Transverse colon (tissue), 4 donors: ENCODE measurements at regions of chr2 and their contacts with region 1.

Region 1: DNA sequence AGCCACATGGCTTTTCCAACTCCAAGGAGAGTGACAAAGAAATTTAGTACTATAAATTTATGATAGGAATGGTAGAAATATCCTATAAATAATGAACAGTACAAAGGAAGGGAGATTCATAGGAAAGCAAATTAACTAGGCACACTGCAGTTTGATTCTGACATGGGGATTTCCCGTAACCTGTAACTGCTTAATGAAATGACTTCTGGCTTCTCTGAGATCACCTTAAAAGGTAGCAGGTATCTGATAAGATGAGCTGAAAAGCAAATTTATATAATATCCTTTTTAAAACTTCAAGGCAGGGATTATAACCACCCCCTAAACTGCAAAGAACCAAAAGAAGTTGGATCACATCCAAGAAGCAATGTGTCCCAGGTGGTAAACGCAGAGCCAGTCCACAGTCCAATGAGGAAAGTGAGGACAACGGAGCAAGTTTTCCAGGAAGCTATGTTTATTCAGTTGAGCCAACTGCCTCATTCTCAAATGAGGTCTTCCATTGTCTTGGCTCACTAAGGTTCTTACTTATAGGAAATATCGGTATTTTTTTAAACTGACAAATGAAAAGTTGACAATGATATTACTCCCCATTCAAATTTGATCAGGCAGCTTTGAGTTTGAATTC is 43.0 kb downstream of the WIPF1 start:
- DNase-seq: no peak
- H3K4me3 ChIP-seq: no peak overlapping the region
- H3K27ac ChIP-seq: peak overlapping the region in 2 of 4 donors; percentile 22 to 23
- H3K4me1 ChIP-seq: peaks cover 0 to 16% (median 0%) of the 10 kb centered on the region in 4 donors
- H3K27me3 ChIP-seq: no peaks in the 10 kb centered on the region
- CTCF ChIP-seq: no peak
- EP300 ChIP-seq: no peak
- POLR2A ChIP-seq: no peak

Region 2: DNA sequence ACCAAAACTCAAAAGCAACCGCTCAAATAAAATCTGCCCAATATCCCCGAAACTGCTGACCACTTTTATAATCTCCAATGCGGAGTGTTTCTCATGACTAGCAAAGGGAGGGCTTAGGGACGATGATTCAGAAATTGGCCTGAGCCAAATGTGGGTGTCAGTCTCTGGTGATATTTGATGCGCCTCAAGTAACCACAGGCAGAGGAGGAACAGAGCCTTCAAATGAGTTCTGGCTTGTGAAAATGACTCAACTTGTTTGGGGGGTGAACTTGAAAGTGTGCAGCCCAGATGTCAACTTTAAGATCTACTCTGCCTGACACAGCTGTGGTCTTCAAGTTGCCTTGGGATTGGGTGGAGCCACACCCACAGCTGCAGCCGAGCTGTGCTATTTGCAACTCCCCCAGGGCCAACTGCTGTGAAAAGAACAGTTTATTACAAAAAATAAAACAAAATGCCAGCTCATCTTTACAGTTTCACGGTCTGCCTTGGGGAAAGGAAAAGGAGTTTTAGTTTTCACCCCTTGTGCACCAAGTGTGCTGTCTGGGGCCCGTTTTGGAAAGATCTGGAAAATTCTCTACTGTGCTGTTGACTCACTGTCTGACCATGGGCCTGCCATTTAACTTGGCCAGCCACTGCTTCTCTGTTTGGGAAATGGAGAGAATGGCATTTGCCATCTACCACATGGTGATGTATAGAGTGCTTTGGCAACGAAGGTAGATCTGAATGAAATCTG is 1936.7 kb after region 1 on chr2:
- in situ Hi-C with region 1: no loop called
- intact Hi-C with region 1: loop called (anchors 5 kb)
- DNase-seq: no peak
- H3K4me3 ChIP-seq: no peak overlapping the region
- H3K27ac ChIP-seq: peak overlapping the region; percentile 66 to 71 (median 66)
- H3K4me1 ChIP-seq: peaks cover 0 to 1% (median 0%) of the 10 kb centered on the region in 4 donors
- H3K27me3 ChIP-seq: no peaks in the 10 kb centered on the region
- CTCF ChIP-seq: no peak
- EP300 ChIP-seq: no peak
- POLR2A ChIP-seq: no peak